ENCODE measurements at regions of chr16 and their contacts with region 1.

Region 1: DNA sequence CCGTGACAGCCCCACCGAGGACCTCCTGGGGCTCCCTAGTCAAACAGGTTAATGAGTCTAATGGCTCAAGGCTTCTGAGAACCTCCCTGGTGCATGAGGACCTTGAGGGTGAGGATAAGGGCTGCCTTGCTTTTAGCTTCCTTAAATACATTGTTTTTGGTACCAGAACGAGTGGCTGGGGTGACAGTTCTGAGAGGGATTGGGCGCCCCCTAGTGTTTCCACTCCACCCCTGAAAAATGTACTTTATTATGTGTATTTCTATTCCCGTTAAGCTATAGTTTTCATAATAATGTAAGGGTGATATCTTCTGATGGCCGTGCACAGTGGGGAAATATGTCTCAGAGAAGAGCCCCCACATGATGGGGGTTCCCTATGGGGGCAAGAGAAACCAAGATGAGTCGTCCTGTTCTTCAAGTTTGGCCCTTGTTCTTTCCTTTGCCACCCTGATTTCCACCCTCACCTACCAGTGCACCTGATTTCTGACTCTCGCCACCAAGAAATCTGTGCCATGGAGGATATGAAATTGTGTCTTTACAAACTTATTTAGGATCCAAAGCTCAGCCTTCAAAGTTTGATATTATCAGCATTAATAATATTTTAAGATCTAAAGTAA is 14.5 kb upstream of the VWA3A start:
- DNase-seq: peak; percentile 74
- ATAC-seq: peak; percentile 95
- H3K4me3 Mint-ChIP-seq: no peak overlapping the region
- H3K27ac Mint-ChIP-seq: no peak overlapping the region
- H3K4me1 Mint-ChIP-seq: no peaks in the 10 kb centered on the region; the same call in 1 of the 2 replicates
- H3K27me3 Mint-ChIP-seq: no peaks in the 10 kb centered on the region
- CTCF ChIP-seq: peak; percentile 86

Region 2: GRCh38 chr16:21994856-21995465 is 82.8 kb before region 1 on chr16:
- CTCF ChIA-PET with region 1: interaction called, 95 read pairs
- POLR2A ChIA-PET with region 1: interaction called, 3 read pairs
- DNase-seq: no peak
- ATAC-seq: peak; percentile 61
- H3K4me3 Mint-ChIP-seq: no peak overlapping the region
- H3K27ac Mint-ChIP-seq: peak overlapping the region; percentile 92; the same call in 1 of the 2 replicates
- H3K4me1 Mint-ChIP-seq: peaks cover 12% of the 10 kb centered on the region
- H3K27me3 Mint-ChIP-seq: no peaks in the 10 kb centered on the region
- CTCF ChIP-seq: no peak

Region 3: GRCh38 chr16:22035153-22035552 is 42.7 kb before region 1 on chr16:
- CTCF ChIA-PET with region 1: interaction called, 23 read pairs
- POLR2A ChIA-PET with region 1: no interaction called
- DNase-seq: no peak
- ATAC-seq: peak; percentile 47
- H3K4me3 Mint-ChIP-seq: no peak overlapping the region
- H3K27ac Mint-ChIP-seq: peak overlapping the region; percentile 76; the same call in 1 of the 2 replicates
- H3K4me1 Mint-ChIP-seq: peaks cover 16% of the 10 kb centered on the region
- H3K27me3 Mint-ChIP-seq: no peaks in the 10 kb centered on the region
- CTCF ChIP-seq: no peak

Region 4: DNA sequence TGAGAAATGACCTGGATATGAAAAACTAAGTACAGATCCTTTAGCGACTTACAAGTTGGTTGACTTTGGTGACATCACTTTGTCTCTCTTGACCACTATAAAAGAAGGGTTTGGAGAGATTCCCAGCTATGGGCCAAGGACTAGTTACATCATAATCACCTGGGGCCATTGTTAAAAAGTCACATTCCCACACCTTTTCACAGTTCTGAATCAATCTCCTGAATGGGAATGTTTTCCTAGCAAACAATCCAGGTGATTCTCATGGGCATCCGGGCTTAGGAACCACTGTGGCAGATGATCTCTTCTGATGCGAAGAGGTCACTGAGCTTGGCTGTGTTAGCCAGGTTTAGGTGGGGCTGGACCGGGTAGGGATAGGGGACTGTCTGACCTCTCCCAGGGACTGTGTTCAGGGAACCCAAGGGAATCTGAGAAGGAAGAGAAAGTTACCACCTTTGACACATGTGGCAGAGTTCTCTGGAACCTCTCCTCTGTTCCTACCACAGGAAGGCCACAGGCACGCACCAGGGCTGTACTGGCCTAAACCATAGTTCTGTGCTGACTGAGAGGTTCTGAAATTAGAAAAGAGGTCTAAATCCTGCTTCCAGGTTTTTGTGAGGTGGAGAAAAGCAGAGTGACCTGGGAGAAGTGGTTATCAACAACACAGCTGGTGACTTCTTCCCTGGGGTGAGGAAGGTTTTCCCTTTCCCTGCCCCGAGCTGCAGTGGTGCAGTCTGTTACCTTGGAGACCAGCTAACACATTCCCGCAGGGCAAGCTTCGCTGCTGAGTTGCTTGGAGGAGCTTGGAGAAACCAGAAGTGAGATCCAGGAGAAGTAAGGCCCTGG is 14.2 kb after region 1 on chr16 and contains the start of gene VWA3A:
- CTCF ChIA-PET with region 1: interaction called, 56 read pairs
- POLR2A ChIA-PET with region 1: no interaction called
- DNase-seq: peak; percentile 57
- ATAC-seq: peak; percentile 91
- H3K4me3 Mint-ChIP-seq: peak within 1 kb of the TSS; percentile 18; the same call in 1 of the 2 replicates
- H3K27ac Mint-ChIP-seq: peak within 1 kb of the TSS; percentile 37; the same call in 1 of the 2 replicates
- H3K4me1 Mint-ChIP-seq: peaks cover 10% of the 10 kb centered on the region
- H3K27me3 Mint-ChIP-seq: no peaks in the 10 kb centered on the region; the same call in 1 of the 2 replicates
- CTCF ChIP-seq: no peak
- total RNA-seq, gene VWA3A: 0.11 TPM in 1 of 3 replicates, not detected in the others

Region 5: GRCh38 chr16:22141746-22142145 is 63.9 kb after region 1 on chr16:
- CTCF ChIA-PET with region 1: interaction called, 15 read pairs
- POLR2A ChIA-PET with region 1: no interaction called
- DNase-seq: peak; percentile 55
- ATAC-seq: peak; percentile 95
- H3K4me3 Mint-ChIP-seq: no peak overlapping the region
- H3K27ac Mint-ChIP-seq: no peak overlapping the region
- H3K4me1 Mint-ChIP-seq: peaks cover 10% of the 10 kb centered on the region; the same call in 1 of the 2 replicates
- H3K27me3 Mint-ChIP-seq: no peaks in the 10 kb centered on the region
- CTCF ChIP-seq: peak; percentile 58

Region 6: GRCh38 chr16:22190776-22191531 is 113.1 kb after region 1 on chr16:
- CTCF ChIA-PET with region 1: interaction called, 37 read pairs
- POLR2A ChIA-PET with region 1: no interaction called
- DNase-seq: peak; percentile 100
- ATAC-seq: peak; percentile 78
- H3K4me3 Mint-ChIP-seq: peak overlapping the region; percentile 88
- H3K27ac Mint-ChIP-seq: peak overlapping the region; percentile 98
- H3K4me1 Mint-ChIP-seq: peaks cover 38% of the 10 kb centered on the region
- H3K27me3 Mint-ChIP-seq: peaks cover 18% of the 10 kb centered on the region
- CTCF ChIP-seq: no peak

Region 7: GRCh38 chr16:22428654-22429053 is 350.8 kb after region 1 on chr16:
- CTCF ChIA-PET with region 1: no interaction called
- POLR2A ChIA-PET with region 1: no interaction called
- DNase-seq: no peak
- ATAC-seq: no peak
- H3K4me3 Mint-ChIP-seq: no peak overlapping the region
- H3K27ac Mint-ChIP-seq: no peak overlapping the region
- H3K4me1 Mint-ChIP-seq: 0 out of 2 replicates have a peak, but pooled peaks cover 2% of the 10 kb centered on the region
- H3K27me3 Mint-ChIP-seq: no peaks in the 10 kb centered on the region
- CTCF ChIP-seq: no peak

Measured in WTC11 (cell line).